ENCODE measurements at regions of chr1 and their contacts with region 1.

Region 1: GRCh38 chr1:179809506-179810366 is 66.6 kb downstream of the FAM163A start:
- DNase-seq: peak; percentile 49 to 90
- ATAC-seq: peak; percentile 70 to 75 (median 73)
- H3K4me3 ChIP-seq: no peak overlapping the region
- H3K4me3 Mint-ChIP-seq: no peak overlapping the region
- H3K27ac ChIP-seq: no peak overlapping the region
- H3K27ac Mint-ChIP-seq: no peak overlapping the region
- H3K4me1 ChIP-seq: peaks cover 13% of the 10 kb centered on the region
- H3K4me1 Mint-ChIP-seq: peaks cover 5 to 11% of the 10 kb centered on the region in 2 donors
- H3K27me3 ChIP-seq: no peaks in the 10 kb centered on the region
- H3K27me3 Mint-ChIP-seq: peaks cover 11 to 13% of the 10 kb centered on the region in 2 donors
- CTCF ChIP-seq: peak; percentile 95

Region 2: DNA sequence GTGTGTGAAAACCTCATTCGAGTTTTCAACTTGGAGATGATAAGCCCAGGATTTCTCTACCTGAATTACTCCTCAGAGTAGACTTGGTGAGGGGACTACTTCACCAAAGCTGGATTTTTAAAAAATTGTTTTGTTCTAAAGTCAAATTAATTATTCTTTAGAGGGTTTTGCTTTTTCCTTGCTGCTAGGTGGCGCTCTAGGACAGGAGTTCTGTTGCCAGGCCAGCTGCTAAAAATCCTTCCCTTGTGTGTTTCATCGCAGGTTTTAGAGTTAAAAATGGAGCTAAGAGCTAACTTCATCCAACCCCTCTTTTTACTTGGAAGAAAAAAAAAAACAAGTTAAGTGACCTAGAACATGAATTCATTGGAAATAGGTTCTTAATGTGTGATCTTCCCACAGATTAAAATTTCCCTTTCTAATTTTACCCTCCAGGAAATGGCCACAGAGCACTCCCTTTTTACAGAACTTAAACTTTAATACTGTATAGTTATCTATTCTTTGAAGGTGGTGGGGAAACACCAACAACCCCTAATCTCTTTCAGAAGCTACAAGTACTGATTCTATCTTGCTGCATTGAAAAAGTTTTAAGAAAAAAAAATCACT is 103.3 kb before region 1 on chr1:
- intact Hi-C with region 1: loop called (anchors 1 kb)
- DNase-seq: peak in 1 of 2 donors; percentile 85
- ATAC-seq: no peak
- H3K4me3 ChIP-seq: no peak overlapping the region
- H3K4me3 Mint-ChIP-seq: no peak overlapping the region
- H3K27ac ChIP-seq: no peak overlapping the region
- H3K27ac Mint-ChIP-seq: no peak overlapping the region
- H3K4me1 ChIP-seq: no peaks in the 10 kb centered on the region
- H3K4me1 Mint-ChIP-seq: peaks cover 0 to 8% of the 10 kb centered on the region in 2 donors
- H3K27me3 ChIP-seq: no peaks in the 10 kb centered on the region
- H3K27me3 Mint-ChIP-seq: peaks cover 2 to 4% of the 10 kb centered on the region in 2 donors
- CTCF ChIP-seq: peak; percentile 61

Region 3: DNA sequence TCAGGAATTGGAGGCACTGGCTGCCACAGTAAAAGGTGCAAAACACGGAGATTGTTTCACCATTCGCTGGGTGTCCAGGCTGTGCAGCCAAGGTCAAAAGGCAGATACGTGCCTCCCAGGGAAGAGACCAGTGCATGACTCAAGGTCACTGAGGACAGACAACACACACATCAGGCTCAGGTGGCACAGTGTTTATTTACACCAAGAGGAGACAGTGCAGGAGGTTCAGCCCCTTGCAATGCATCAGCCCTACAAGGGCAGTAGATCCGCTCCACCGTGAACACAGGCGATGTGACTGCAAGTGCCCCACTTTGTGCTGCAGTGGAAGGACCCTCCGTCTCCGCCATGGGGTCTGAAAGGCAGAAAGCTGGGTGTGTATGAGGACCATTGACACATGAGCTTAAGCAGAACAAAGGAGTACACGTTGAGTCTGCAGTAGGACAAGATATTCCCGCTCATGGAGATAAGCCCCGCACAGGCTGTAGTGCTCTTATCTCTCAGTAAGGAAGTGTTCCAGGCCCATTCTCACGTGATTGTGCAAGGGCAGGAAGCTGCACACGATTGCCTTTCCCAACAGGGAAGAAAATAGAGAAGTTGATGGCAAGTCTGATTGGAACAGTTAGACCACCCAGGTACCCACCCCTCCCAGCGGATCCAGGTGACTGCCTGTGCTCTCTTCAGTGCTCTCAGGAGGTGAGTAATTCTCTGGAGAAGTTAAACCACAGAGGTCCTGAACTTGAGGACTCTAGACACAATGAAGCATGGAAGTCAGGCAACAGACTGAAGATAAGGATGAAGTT is 307.4 kb after region 1 on chr1:
- intact Hi-C with region 1: no loop called
- DNase-seq: no peak
- ATAC-seq: no peak
- H3K4me3 ChIP-seq: no peak overlapping the region
- H3K4me3 Mint-ChIP-seq: no peak overlapping the region
- H3K27ac ChIP-seq: no peak overlapping the region
- H3K27ac Mint-ChIP-seq: no peak overlapping the region
- H3K4me1 ChIP-seq: no peaks in the 10 kb centered on the region
- H3K4me1 Mint-ChIP-seq: peaks cover 7 to 8% of the 10 kb centered on the region in 2 donors
- H3K27me3 ChIP-seq: no peaks in the 10 kb centered on the region
- H3K27me3 Mint-ChIP-seq: peaks cover 0 to 2% of the 10 kb centered on the region in 2 donors
- CTCF ChIP-seq: no peak